Stomach (tissue), 19 donors: ENCODE measurements at regions of chrX and their contacts with region 1.

Region 1: GRCh38 chrX:18899796-18900447 is 84.0 kb downstream of the PHKA2 start:
- DNase-seq: peak in 1 of 2 donors; percentile 34
- H3K4me3 ChIP-seq: no peak overlapping the region
- H3K27ac ChIP-seq: no peak overlapping the region
- H3K4me1 ChIP-seq: peaks cover 0 to 6% (median 0%) of the 10 kb centered on the region in 4 donors
- H3K27me3 ChIP-seq: no peaks in the 10 kb centered on the region
- CTCF ChIP-seq: peak in 1 of 7 experiments; percentile 15
- EP300 ChIP-seq: no peak
- POLR2A ChIP-seq: no peak

Region 2: GRCh38 chrX:18406531-18407266 is 493.2 kb before region 1 on chrX:
- intact Hi-C with region 1: loop called (anchors 10 kb)
- DNase-seq: no peak
- H3K4me3 ChIP-seq: no peak overlapping the region
- H3K27ac ChIP-seq: no peak overlapping the region
- H3K4me1 ChIP-seq: no peaks in the 10 kb centered on the region
- H3K27me3 ChIP-seq: peaks cover 0 to 6% (median 0%) of the 10 kb centered on the region in 3 donors
- CTCF ChIP-seq: no peak
- EP300 ChIP-seq: no peak
- POLR2A ChIP-seq: no peak